ENCODE measurements at regions of chr1 and their contacts with region 1.

Region 1: DNA sequence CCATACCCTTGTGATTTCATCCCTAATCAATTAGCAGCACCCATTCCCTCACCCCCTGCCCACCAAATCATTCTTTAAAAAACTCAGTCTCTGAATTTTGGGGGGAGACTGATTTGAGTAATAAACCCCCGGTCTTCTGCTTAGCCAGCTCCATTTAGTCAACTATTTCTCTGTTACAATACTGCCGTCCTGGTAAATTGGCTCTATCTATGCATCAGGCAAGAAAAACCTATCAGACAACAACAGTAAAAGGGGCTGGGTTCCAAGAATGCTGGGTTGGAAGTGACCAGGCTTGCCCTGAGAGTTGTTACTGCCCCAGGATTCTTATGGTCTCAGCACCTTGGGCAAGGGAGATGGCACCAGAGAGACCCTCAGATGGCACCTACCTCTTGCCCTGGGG is 16.3 kb upstream of the C1orf198 start:
- DNase-seq: no peak
- ATAC-seq: no peak
- H3K4me3 ChIP-seq: no peak overlapping the region
- H3K27ac ChIP-seq: no peak overlapping the region
- H3K4me1 ChIP-seq: no peaks in the 10 kb centered on the region
- H3K27me3 ChIP-seq: peaks cover 75 to 90% of the 10 kb centered on the region in 2 experiments
- CTCF ChIP-seq: no peak
- EP300 ChIP-seq: no peak
- POLR2A ChIP-seq: no peak
- RAD21 ChIP-seq: no peak

Region 2: GRCh38 chr1:230459463-230459862 is 425.2 kb before region 1 on chr1:
- CTCF ChIA-PET with region 1: no interaction called
- POLR2A ChIA-PET with region 1: no interaction called
- in situ Hi-C with region 1: no loop called
- intact Hi-C with region 1: loop called (anchors 5 kb)
- DNase-seq: no peak
- ATAC-seq: no peak
- H3K4me3 ChIP-seq: no peak overlapping the region
- H3K27ac ChIP-seq: no peak overlapping the region
- H3K4me1 ChIP-seq: no peaks in the 10 kb centered on the region
- H3K27me3 ChIP-seq: peaks cover 0 to 2% of the 10 kb centered on the region in 2 experiments; a peak in 1 of 5 replicates
- CTCF ChIP-seq: no peak
- EP300 ChIP-seq: no peak
- POLR2A ChIP-seq: no peak
- RAD21 ChIP-seq: no peak